Naive thymus-derived CD4-positive, alpha-beta T cell (primary cell): ENCODE measurements at regions of chr12 and their contacts with region 1.

Region 1: DNA sequence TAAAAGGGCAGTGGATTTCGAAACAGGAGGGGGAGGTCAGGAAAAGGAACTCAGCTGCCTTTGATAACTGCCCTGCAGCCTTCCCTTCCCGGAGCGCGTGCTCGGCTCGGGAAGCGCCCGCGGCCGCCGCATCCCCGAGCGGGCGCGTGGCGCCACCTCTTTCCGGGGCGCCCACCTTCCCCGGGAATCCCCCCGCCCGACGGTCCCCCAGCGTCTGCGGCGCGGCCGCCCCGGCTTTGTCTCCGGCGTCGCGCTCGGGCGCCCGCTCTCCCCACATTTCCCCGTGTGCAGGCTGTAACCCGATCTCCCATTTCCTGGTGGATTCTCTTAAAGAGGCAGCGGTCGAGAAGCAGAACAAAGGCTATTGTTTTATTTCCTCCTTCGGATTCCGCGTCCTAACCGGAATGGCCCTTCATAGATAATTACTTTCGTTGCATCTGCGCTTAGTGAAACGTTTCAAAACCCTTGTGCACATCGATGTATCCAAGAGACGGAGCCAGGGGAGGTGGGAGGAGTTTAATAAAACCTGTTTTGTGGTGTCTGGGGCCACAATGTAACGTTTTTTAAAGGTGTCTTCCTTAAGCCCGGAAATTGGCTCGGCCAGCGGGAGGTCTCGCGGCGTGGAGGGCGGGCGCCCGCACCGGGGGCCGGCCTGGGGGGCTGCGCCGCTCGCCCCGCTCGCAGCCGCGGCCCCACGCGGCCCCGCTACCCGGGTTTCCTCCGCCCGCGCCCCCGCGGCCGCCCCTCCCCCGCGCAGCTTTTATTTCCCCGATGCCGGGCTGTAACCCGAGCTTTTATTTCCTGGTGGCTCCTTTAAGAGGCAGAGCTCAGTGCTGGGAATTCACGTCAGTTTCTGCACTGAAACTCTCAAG is at the start of gene ETV6:
- DNase-seq: peak; percentile 51 to 85 (median 79)
- ATAC-seq: peak; percentile 73
- H3K4me3 ChIP-seq: peak within 1 kb of the TSS; percentile 92
- H3K4me3 Mint-ChIP-seq: peak within 1 kb of the TSS; percentile 82 to 99 (median 98)
- H3K27ac ChIP-seq: peak within 1 kb of the TSS; percentile 90
- H3K27ac Mint-ChIP-seq: peak within 1 kb of the TSS; percentile 91 to 99 (median 97)
- H3K4me1 ChIP-seq: peaks cover 6 to 22% of the 10 kb centered on the region in 2 donors
- H3K4me1 Mint-ChIP-seq: peaks cover 24 to 49% (median 36%) of the 10 kb centered on the region in 7 donors
- H3K27me3 ChIP-seq: no peaks in the 10 kb centered on the region
- H3K27me3 Mint-ChIP-seq: no peaks in the 10 kb centered on the region
- total RNA-seq, gene ETV6: 24.2 to 70.3 (median 38.0) TPM

Region 2: GRCh38 chr12:10613349-10614055 is 1035.6 kb before region 1 on chr12 and contains the start of gene MAGOHB:
- CTCF ChIA-PET with region 1: no interaction called
- POLR2A ChIA-PET with region 1: no interaction called
- intact Hi-C with region 1: loop called in 1 of 2 experiments (anchors 5 kb)
- DNase-seq: peak; percentile 94 to 100 (median 97)
- ATAC-seq: peak; percentile 96
- H3K4me3 ChIP-seq: peak within 1 kb of the TSS; percentile 74
- H3K4me3 Mint-ChIP-seq: peak within 1 kb of the TSS; percentile 93 to 100 (median 98)
- H3K27ac ChIP-seq: peak within 1 kb of the TSS; percentile 93
- H3K27ac Mint-ChIP-seq: peak within 1 kb of the TSS; percentile 97 to 100 (median 100)
- H3K4me1 ChIP-seq: peaks cover 4 to 11% of the 10 kb centered on the region in 2 donors
- H3K4me1 Mint-ChIP-seq: peaks cover 12 to 38% (median 33%) of the 10 kb centered on the region in 7 donors
- H3K27me3 ChIP-seq: no peaks in the 10 kb centered on the region
- H3K27me3 Mint-ChIP-seq: peaks cover 0 to 26% (median 7%) of the 10 kb centered on the region in 5 donors
- total RNA-seq, gene MAGOHB: 12.1 to 43.1 (median 24.8) TPM

Region 3: GRCh38 chr12:11621797-11622423 is 27.2 kb before region 1 on chr12:
- CTCF ChIA-PET with region 1: interaction called, 3 read pairs
- POLR2A ChIA-PET with region 1: no interaction called
- intact Hi-C with region 1: loop called in 1 of 2 experiments (anchors 1 kb)
- DNase-seq: peak in 6 of 9 donors; percentile 8 to 43 (median 28)
- ATAC-seq: no peak
- H3K4me3 ChIP-seq: no peak overlapping the region
- H3K4me3 Mint-ChIP-seq: no peak overlapping the region
- H3K27ac ChIP-seq: no peak overlapping the region
- H3K27ac Mint-ChIP-seq: peak overlapping the region in 1 of 9 donors; percentile 26
- H3K4me1 ChIP-seq: no peaks in the 10 kb centered on the region
- H3K4me1 Mint-ChIP-seq: peaks cover 0 to 10% (median 0%) of the 10 kb centered on the region in 7 donors
- H3K27me3 ChIP-seq: no peaks in the 10 kb centered on the region
- H3K27me3 Mint-ChIP-seq: no peaks in the 10 kb centered on the region

Region 4: DNA sequence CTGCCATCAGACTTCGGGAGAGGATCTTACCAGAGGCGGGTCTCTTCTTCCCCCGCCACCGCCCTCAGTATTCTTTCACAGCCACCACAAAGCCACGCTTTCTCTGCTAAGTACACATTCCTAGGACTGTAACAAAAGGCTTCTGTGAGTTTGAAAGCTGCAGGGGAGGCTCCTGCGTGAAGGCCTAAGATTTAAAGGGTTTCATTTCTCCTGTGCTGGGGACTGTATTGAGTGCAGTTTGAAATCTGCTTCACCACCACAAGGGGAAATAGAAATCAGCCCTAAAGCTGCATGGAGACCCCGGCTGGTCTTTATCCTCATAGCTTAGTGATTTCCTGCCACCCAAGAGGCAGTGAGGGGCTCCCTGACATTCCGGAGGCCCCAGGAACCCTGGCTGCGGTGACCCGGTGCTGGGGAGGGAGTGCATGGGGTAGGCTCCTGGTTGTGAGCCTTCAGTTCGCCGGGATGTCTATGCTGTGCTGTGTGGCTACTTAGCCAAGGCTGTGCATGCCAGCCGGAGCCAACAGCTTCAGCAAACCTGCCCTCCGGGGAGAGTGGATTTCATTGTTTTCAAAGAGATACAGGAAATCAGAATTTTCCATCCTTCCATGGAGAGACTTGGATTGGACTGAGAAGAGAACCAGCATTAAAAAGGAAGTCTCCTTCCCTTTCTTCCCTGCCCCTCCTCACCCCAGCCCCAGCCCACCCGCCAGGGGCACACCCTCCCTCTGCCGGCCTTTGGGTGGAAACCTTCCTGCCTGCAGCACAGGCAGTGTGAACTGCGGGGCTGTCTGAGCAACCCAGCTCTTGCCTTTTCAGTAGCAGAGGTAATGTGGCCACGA is 163.7 kb after region 1 on chr12:
- CTCF ChIA-PET with region 1: interaction called, 3 read pairs
- POLR2A ChIA-PET with region 1: no interaction called
- intact Hi-C with region 1: loop called in 1 of 2 experiments (anchors 1 kb)
- DNase-seq: peak in 7 of 9 donors; percentile 5 to 42 (median 27)
- ATAC-seq: peak; percentile 79
- H3K4me3 ChIP-seq: no peak overlapping the region
- H3K4me3 Mint-ChIP-seq: peak overlapping the region; percentile 61 to 81 (median 74)
- H3K27ac ChIP-seq: peak overlapping the region; percentile 50
- H3K27ac Mint-ChIP-seq: peak overlapping the region; percentile 76 to 93 (median 88)
- H3K4me1 ChIP-seq: peaks cover 0 to 10% of the 10 kb centered on the region in 2 donors
- H3K4me1 Mint-ChIP-seq: peaks cover 35 to 66% (median 51%) of the 10 kb centered on the region in 7 donors
- H3K27me3 ChIP-seq: no peaks in the 10 kb centered on the region
- H3K27me3 Mint-ChIP-seq: no peaks in the 10 kb centered on the region

Region 5: GRCh38 chr12:11992515-11992914 is 343.4 kb after region 1 on chr12:
- CTCF ChIA-PET with region 1: no interaction called
- POLR2A ChIA-PET with region 1: no interaction called
- intact Hi-C with region 1: no loop called
- DNase-seq: no peak
- ATAC-seq: no peak
- H3K4me3 ChIP-seq: no peak overlapping the region
- H3K4me3 Mint-ChIP-seq: no peak overlapping the region
- H3K27ac ChIP-seq: no peak overlapping the region
- H3K27ac Mint-ChIP-seq: peak overlapping the region in 3 of 9 donors; percentile 17 to 68 (median 52)
- H3K4me1 ChIP-seq: peaks cover 0 to under 1% of the 10 kb centered on the region in 2 donors
- H3K4me1 Mint-ChIP-seq: peaks cover 0 to 14% (median 7%) of the 10 kb centered on the region in 7 donors
- H3K27me3 ChIP-seq: no peaks in the 10 kb centered on the region
- H3K27me3 Mint-ChIP-seq: no peaks in the 10 kb centered on the region

Region 6: GRCh38 chr12:12032851-12033588 is 384.0 kb after region 1 on chr12:
- CTCF ChIA-PET with region 1: no interaction called
- POLR2A ChIA-PET with region 1: interaction called, 3 read pairs
- intact Hi-C with region 1: loop called (anchors 1 kb)
- DNase-seq: peak; percentile 46 to 79 (median 65)
- ATAC-seq: peak; percentile 82
- H3K4me3 ChIP-seq: peak overlapping the region; percentile 63
- H3K4me3 Mint-ChIP-seq: peak overlapping the region; percentile 75 to 87 (median 82)
- H3K27ac ChIP-seq: no peak overlapping the region
- H3K27ac Mint-ChIP-seq: peak overlapping the region; percentile 18 to 91 (median 72)
- H3K4me1 ChIP-seq: peaks cover 9 to 13% of the 10 kb centered on the region in 2 donors
- H3K4me1 Mint-ChIP-seq: peaks cover 14 to 50% (median 17%) of the 10 kb centered on the region in 7 donors
- H3K27me3 ChIP-seq: no peaks in the 10 kb centered on the region
- H3K27me3 Mint-ChIP-seq: no peaks in the 10 kb centered on the region

Region 7: DNA sequence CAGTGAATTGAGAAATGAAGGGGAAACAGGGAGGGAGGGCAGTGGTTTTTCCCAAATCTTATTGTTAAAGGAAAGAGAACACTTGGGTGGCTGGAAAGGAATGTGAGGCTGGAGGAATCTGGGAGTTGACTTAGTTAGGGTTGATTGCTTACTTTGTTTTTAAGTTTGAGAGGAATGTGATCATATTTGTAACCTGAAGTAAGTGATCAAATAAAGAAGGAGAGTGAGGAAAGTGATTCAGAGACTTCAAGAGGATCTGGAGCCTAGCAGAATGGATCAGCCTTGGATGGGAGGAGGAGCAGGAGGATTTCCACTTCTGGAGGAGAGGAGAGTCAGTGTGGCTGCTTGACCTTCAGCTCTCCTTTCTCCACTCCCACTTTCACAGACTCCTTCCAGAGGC is 623.8 kb after region 1 on chr12:
- CTCF ChIA-PET with region 1: no interaction called
- POLR2A ChIA-PET with region 1: no interaction called
- intact Hi-C with region 1: no loop called
- DNase-seq: no peak
- ATAC-seq: no peak
- H3K4me3 ChIP-seq: no peak overlapping the region
- H3K4me3 Mint-ChIP-seq: no peak overlapping the region
- H3K27ac ChIP-seq: no peak overlapping the region
- H3K27ac Mint-ChIP-seq: peak overlapping the region in 2 of 9 donors; percentile 22 to 78
- H3K4me1 ChIP-seq: no peaks in the 10 kb centered on the region
- H3K4me1 Mint-ChIP-seq: peaks cover 0 to 3% (median 0%) of the 10 kb centered on the region in 7 donors
- H3K27me3 ChIP-seq: no peaks in the 10 kb centered on the region
- H3K27me3 Mint-ChIP-seq: peaks cover 0 to 28% (median 0%) of the 10 kb centered on the region in 5 donors

Region 8: GRCh38 chr12:12562585-12563261 is 913.7 kb after region 1 on chr12 and contains the start of gene DUSP16:
- CTCF ChIA-PET with region 1: no interaction called
- POLR2A ChIA-PET with region 1: no interaction called
- intact Hi-C with region 1: loop called in 1 of 2 experiments (anchors 5 kb)
- DNase-seq: peak; percentile 75 to 92 (median 88)
- ATAC-seq: peak; percentile 85
- H3K4me3 ChIP-seq: peak within 1 kb of the TSS; percentile 62
- H3K4me3 Mint-ChIP-seq: peak within 1 kb of the TSS; percentile 87 to 97 (median 92)
- H3K27ac ChIP-seq: peak within 1 kb of the TSS; percentile 92
- H3K27ac Mint-ChIP-seq: peak within 1 kb of the TSS; percentile 94 to 100 (median 99)
- H3K4me1 ChIP-seq: peaks cover 14 to 16% of the 10 kb centered on the region in 2 donors
- H3K4me1 Mint-ChIP-seq: peaks cover 14 to 50% (median 37%) of the 10 kb centered on the region in 7 donors
- H3K27me3 ChIP-seq: no peaks in the 10 kb centered on the region
- H3K27me3 Mint-ChIP-seq: no peaks in the 10 kb centered on the region
- total RNA-seq, gene DUSP16: 26.8 to 42.8 (median 38.9) TPM